Ascending aorta (tissue), 2 donors: ENCODE measurements at regions of chr20 and their contacts with region 1.

Region 1: DNA sequence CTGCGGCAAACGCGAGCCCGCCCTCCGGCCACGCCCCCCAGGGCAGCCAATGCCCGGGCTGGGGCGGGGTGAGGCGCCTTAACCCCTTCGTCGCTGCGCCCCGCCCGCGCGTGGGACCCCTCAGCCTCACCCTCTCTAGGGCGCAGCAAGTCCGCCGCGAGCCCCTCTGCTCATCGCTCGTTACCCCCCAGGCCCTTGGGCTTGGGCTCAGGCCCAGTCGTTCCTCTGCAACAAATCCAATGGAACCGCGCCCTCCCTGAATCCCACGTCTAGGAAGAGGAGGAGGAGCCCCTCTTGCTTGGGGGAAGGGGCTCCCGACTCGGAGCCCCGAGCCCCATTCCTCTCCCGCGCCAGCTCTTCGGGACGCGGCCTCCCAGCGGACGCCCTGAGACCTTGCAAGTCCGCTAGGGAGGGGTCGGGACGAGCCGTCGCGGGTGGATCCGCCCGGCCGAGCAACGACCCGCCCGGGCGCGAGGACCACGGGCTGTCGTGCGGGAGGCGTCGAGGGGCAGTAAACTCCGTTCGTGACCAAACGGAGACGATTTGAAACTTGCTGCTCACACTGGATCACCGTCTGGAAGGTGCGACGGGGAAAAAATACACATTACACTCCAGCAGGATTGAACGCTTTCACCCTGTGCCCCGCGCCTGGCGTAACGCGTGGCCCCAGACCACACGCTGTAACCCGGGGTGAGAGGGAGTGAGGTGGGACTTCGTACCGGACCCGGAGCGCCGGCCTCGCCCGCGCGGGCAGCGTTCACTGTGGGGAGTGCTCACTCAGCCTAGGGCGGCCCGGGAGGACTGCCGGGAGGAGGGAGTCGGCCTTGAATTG is 477 bp upstream of the LZTS3 start:
- DNase-seq: peak in 1 of 2 donors; percentile 93
- H3K4me3 ChIP-seq: peak overlapping the region; percentile 85 to 88
- H3K27ac ChIP-seq: peak overlapping the region; percentile 77 to 78
- H3K4me1 ChIP-seq: peaks cover 0 to 4% of the 10 kb centered on the region in 2 donors
- H3K27me3 ChIP-seq: no peaks in the 10 kb centered on the region
- CTCF ChIP-seq: peak; percentile 15 to 24 (median 23)

Region 2: GRCh38 chr20:2873010-2873746 is 300.6 kb before region 1 on chr20 and contains the start of gene PTPRA:
- intact Hi-C with region 1: loop called (anchors 10 kb)
- DNase-seq: peak; percentile 71 to 94
- H3K4me3 ChIP-seq: peak within 1 kb of the TSS; percentile 81 to 96
- H3K27ac ChIP-seq: peak within 1 kb of the TSS; percentile 62 to 66
- H3K4me1 ChIP-seq: peaks cover 4 to 8% of the 10 kb centered on the region in 2 donors
- H3K27me3 ChIP-seq: no peaks in the 10 kb centered on the region
- CTCF ChIP-seq: no peak
- total RNA-seq, gene PTPRA: 24.2 TPM

Region 3: DNA sequence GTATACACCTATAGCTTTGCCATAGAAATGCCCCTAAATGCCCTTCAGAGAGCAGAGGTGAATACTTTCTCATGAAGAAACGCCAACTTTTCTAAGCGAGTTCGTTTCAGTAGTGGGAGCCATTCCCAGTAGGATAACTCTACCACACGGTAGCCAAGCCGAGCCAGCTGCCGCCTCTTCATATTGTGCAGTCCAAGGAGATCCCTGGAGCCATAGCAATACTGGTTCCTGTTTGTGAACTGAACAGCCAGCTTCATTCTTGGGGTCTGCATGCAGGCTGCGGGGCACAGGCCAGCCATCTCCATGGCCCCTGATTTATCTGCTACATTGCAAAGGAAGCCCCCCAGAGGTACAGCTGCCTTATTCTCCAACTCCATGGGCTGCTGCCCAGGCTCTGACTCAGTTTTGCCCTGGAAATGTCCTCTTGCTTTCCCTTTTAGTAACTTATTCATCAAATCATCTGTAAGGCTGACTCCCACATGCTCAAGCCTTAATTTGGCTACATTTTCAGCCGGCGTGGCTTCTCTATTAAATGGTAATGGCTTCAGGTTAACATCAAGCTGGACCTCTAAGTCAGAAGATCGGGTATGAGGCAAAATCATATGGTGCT is 27.0 kb before region 1 on chr20:
- intact Hi-C with region 1: no loop called
- DNase-seq: no peak
- H3K4me3 ChIP-seq: no peak overlapping the region
- H3K27ac ChIP-seq: no peak overlapping the region
- H3K4me1 ChIP-seq: peaks cover 0 to 3% of the 10 kb centered on the region in 2 donors
- H3K27me3 ChIP-seq: no peaks in the 10 kb centered on the region
- CTCF ChIP-seq: no peak

Region 4: DNA sequence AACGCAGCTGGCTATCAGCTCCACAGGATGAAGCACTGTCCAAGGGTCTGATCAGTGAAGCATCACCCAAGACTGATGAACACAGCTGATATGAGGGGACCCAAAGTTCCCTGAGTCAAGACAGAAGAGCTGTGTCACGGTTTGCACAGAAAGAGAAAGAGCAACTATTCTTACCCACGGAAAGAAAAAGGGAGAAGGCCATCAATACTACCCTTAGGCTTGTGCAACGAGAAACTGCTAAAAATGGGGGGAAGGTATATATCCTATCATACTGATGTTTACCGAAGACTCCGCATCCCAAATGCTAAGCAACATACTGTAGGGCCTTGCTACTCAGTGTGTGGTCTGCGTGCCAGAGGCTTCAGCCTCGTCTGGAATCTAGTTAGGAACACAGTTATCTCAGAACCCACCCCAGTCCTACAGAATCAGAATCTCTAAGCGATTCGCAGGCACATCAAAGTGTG is 14.8 kb before region 1 on chr20:
- intact Hi-C with region 1: loop called (anchors 1 kb)
- DNase-seq: no peak
- H3K4me3 ChIP-seq: peak overlapping the region; percentile 86 to 94
- H3K27ac ChIP-seq: peak overlapping the region; percentile 81 to 89
- H3K4me1 ChIP-seq: peaks cover 12 to 27% of the 10 kb centered on the region in 2 donors
- H3K27me3 ChIP-seq: no peaks in the 10 kb centered on the region
- CTCF ChIP-seq: no peak

Region 5: DNA sequence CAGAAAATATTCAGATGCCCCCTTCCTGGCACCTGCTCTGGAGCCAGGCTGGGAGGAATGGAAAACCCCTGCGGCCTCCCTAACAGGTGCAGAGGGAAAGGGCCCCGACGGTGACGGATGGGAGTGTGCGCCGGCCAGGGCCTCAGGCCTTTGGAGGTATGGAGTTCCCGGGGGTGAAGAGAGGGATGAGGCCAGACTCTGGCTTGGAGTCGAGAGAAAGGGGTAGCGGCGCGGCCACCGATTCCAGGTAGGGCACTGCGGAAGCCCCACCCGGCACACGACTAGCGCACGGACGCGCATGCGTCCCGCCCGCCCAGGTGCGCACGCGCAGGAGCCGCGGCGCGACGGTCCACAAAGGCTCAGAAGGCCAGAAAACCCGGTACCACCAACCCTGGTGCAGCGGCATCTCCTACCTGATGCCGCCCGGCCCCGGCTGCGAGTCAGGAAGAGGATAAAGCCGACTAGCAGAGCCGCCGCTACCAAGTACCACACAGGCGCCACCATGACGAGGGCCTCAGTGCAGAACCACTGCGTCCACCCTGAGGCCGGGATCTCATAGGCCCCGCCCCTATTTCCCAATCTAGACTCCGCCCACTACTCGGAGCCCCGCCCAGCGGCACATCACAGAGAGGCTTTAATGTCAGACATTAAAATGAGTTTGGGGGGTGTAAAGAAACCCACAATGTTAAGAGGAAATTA is 30.4 kb after region 1 on chr20 and contains the start of gene DDRGK1:
- intact Hi-C with region 1: loop called (anchors 1 kb)
- DNase-seq: peak; percentile 51 to 94
- H3K4me3 ChIP-seq: peak within 1 kb of the TSS; percentile 72 to 90
- H3K27ac ChIP-seq: peak within 1 kb of the TSS; percentile 78 to 89
- H3K4me1 ChIP-seq: peaks cover 7 to 10% of the 10 kb centered on the region in 2 donors
- H3K27me3 ChIP-seq: no peaks in the 10 kb centered on the region
- CTCF ChIP-seq: no peak
- total RNA-seq, gene DDRGK1: 18.0 TPM

Region 6: GRCh38 chr20:3407771-3408637 is 234.2 kb after region 1 on chr20:
- intact Hi-C with region 1: loop called (anchors 10 kb)
- DNase-seq: peak in 1 of 2 donors; percentile 84
- H3K4me3 ChIP-seq: peak overlapping the region; percentile 89 to 93
- H3K27ac ChIP-seq: peak overlapping the region; percentile 95
- H3K4me1 ChIP-seq: peaks cover 0 to 7% of the 10 kb centered on the region in 2 donors
- H3K27me3 ChIP-seq: no peaks in the 10 kb centered on the region
- CTCF ChIP-seq: no peak

Region 7: DNA sequence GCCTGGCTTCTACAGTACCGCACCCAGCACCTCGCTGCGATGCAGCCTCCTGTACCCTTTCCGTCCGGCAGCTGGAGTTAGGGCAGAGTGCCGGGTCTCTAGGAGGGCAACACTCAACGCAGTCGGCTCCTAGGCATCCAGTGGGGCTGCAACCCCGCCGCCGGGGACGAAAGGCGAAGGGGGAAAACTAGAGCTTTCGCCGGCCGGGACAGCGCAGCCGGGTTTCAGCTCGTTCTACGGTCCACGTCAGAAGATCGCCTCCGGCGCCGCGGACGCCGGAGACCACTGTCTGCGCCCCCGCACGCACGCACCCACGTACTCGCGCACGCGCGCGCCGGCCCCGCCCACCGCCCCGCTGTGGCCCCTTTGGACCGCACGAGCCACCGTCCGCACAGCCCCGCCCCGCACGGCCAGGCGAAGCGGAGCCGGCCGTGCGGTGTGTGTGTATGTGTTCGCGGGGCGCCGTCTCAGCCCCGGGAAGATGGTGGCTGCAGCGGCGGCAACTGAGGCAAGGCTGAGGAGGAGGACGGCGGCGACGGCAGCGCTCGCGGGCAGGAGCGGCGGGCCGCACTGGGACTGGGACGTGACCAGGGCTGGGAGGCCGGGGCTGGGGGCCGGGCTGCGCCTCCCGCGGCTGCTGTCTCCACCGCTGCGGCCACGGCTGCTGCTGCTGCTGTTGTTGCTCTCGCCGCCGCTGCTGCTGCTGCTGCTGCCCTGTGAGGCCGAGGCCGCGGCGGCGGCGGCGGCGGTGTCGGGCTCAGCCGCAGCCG is 297.0 kb after region 1 on chr20 and contains the start of gene ATRN:
- intact Hi-C with region 1: loop called (anchors 5 kb)
- DNase-seq: peak; percentile 55 to 94
- H3K4me3 ChIP-seq: peak within 1 kb of the TSS; percentile 93 to 99
- H3K27ac ChIP-seq: peak within 1 kb of the TSS; percentile 70 to 85
- H3K4me1 ChIP-seq: peaks cover 12 to 23% of the 10 kb centered on the region in 2 donors
- H3K27me3 ChIP-seq: no peaks in the 10 kb centered on the region
- CTCF ChIP-seq: no peak
- total RNA-seq, gene ATRN: 8.6 TPM